Brain microvascular endothelial cell (primary cell): ENCODE measurements at regions of chr1 and their contacts with region 1.

Region 1: DNA sequence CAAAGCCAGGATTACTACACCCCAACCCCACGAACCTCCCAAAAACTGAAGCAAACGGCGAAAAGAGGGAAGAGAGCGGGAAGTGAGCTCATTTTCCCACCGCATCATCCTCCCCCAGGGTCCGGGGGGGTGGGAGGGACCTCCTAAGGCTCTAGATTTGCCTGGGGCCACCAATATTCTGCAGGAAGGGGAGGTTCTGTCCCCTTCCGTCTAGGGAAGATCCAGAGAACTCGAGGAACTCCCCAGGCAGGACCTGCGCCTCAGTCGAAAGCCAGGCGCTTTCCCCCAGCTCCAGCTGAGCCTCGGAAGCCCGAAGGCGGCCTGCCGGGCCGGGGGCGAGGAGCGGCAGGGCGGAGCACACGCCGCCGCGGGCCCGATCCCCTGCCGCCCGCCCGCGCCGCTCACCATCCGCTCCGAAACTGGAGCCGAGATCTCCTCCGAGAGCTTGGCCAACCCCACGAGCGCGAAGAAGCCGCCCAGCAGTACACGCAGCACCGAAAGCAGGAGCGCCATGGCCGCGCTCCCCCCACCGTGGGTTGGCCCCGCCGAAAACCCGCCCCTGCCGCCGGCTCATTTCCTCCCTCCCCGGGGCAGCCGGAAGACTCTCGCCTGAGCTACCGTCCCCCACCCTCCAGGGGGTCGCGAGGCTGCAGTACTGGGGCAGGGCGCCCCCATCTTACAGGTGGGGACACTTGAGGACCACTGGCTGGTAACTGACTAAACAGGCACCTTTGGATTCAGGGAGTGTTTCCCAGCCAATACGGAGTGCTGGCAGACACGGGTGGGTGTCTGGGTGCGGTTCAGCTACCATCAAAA is at the start of gene TMEM35B:
- DNase-seq: peak; percentile 46
- H3K4me3 ChIP-seq: peak within 1 kb of the TSS; percentile 77
- H3K27ac ChIP-seq: peak within 1 kb of the TSS; percentile 68
- H3K27me3 ChIP-seq: no peaks in the 10 kb centered on the region
- CTCF ChIP-seq: peak; percentile 21

Region 2: GRCh38 chr1:34763142-34763781 is 221.7 kb before region 1 on chr1:
- in situ Hi-C with region 1: no loop called
- DNase-seq: peak; percentile 24
- H3K4me3 ChIP-seq: no peak overlapping the region
- H3K27ac ChIP-seq: no peak overlapping the region
- H3K27me3 ChIP-seq: no peaks in the 10 kb centered on the region
- CTCF ChIP-seq: no peak

Region 3: GRCh38 chr1:35120458-35121133 is 135.6 kb after region 1 on chr1:
- in situ Hi-C with region 1: loop called (anchors 25 kb)
- DNase-seq: no peak
- H3K4me3 ChIP-seq: peak overlapping the region; percentile 45
- H3K27ac ChIP-seq: no peak overlapping the region
- H3K27me3 ChIP-seq: no peaks in the 10 kb centered on the region
- CTCF ChIP-seq: no peak